Activated CD4-positive, alpha-beta memory T cell treated with anti-CD3 and anti-CD28 coated beads for 36 hours (primary cell): ENCODE measurements at regions of chr10 and their contacts with region 1.

Region 1: GRCh38 chr10:69957886-69958555 is 94.6 kb upstream of the MACROH2A2 start:
- DNase-seq: peak; percentile 21
- H3K4me3 Mint-ChIP-seq: no peak overlapping the region
- H3K27ac Mint-ChIP-seq: no peak overlapping the region
- H3K4me1 Mint-ChIP-seq: no peaks in the 10 kb centered on the region
- H3K27me3 Mint-ChIP-seq: peaks cover 9% of the 10 kb centered on the region

Region 2: DNA sequence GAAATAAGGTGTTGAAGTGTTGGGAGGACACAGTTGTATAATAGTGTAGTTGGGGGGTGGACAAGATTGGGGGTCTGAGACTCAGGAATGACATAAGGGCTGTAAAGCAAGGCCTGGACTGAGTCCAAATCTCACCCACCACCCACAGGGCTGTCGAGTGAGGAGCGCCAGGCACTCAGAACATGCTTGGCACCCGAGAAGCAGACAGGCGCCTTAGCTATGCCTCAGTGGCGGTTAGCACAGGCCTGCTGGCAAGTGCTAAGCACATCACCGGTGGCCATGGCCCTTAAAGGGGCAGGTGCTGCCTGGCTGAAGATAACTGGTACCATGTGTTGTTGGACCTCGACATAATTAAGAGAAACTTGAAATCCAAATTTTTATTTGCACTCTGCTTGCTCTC is 65.6 kb before region 1 on chr10:
- CTCF ChIA-PET with region 1: no interaction called
- POLR2A ChIA-PET with region 1: no interaction called
- intact Hi-C with region 1: no loop called
- DNase-seq: no peak
- H3K4me3 Mint-ChIP-seq: no peak overlapping the region
- H3K27ac Mint-ChIP-seq: no peak overlapping the region
- H3K4me1 Mint-ChIP-seq: no peaks in the 10 kb centered on the region
- H3K27me3 Mint-ChIP-seq: peaks cover 2% of the 10 kb centered on the region

Region 3: GRCh38 chr10:69938541-69938991 is 19.5 kb before region 1 on chr10:
- CTCF ChIA-PET with region 1: interaction called, 10 read pairs
- POLR2A ChIA-PET with region 1: no interaction called
- intact Hi-C with region 1: no loop called
- DNase-seq: no peak
- H3K4me3 Mint-ChIP-seq: no peak overlapping the region
- H3K27ac Mint-ChIP-seq: no peak overlapping the region
- H3K4me1 Mint-ChIP-seq: no peaks in the 10 kb centered on the region
- H3K27me3 Mint-ChIP-seq: no peaks in the 10 kb centered on the region

Region 4: GRCh38 chr10:70162892-70163201 is 204.8 kb after region 1 on chr10:
- CTCF ChIA-PET with region 1: no interaction called
- POLR2A ChIA-PET with region 1: no interaction called
- intact Hi-C with region 1: no loop called
- DNase-seq: peak; percentile 82
- H3K4me3 Mint-ChIP-seq: peak overlapping the region; percentile 40
- H3K27ac Mint-ChIP-seq: peak overlapping the region; percentile 93
- H3K4me1 Mint-ChIP-seq: peaks cover 69% of the 10 kb centered on the region
- H3K27me3 Mint-ChIP-seq: no peaks in the 10 kb centered on the region